Activated CD8-positive, alpha-beta T cell treated with anti-CD3 and anti-CD28 coated beads for 36 hours (primary cell): ENCODE measurements at regions of chr5 and their contacts with region 1.

Region 1: GRCh38 chr5:14644623-14645237 is 19.8 kb upstream of the OTULIN start:
- DNase-seq: no peak
- ATAC-seq: no peak
- H3K4me3 Mint-ChIP-seq: no peak overlapping the region
- H3K27ac Mint-ChIP-seq: no peak overlapping the region
- H3K4me1 Mint-ChIP-seq: no peaks in the 10 kb centered on the region
- H3K27me3 Mint-ChIP-seq: peaks cover 14% of the 10 kb centered on the region
- CTCF ChIP-seq: no peak

Region 2: DNA sequence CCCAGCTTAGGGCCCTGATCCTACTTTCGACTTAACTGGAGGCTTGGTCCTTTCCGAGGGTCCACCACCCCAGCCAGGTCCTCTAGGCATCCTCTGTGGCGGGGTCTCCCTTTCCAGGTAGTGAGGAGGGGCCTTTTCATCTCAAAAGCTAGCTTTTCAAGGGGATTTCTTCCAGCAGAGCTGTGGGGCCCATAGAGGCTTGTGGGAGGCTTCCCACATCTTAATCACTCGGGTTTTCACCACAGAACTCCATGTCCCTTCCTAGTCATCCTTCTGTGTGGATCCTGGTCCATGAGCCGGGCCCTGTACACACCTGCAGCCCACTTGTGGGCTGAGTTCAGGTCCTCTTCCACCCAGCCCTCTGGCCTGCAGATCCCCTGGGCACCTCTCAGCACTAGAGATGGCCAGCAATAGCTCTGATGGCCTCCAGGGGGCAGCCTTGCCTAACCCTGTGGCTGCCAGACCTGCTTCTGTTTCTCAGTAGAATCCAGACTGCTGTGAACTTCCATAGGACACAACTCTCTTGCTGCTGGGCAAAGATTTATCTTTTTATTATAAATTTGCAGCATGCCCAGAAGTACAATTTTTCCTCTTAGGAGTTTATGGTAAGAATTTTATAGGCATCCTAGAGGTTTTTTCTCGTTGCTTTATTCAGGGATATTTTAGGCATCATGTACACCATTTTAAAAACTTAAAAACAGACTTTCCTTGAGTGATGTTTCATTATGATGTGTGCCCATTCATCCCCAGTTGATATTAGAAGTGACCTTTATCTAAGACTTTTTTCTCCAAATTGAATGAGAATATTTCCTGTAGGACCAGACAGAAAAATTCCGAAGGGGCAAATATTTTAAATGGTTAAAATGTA is 292.7 kb before region 1 on chr5:
- CTCF ChIA-PET with region 1: interaction called, 50 read pairs
- POLR2A ChIA-PET with region 1: no interaction called
- intact Hi-C with region 1: no loop called
- DNase-seq: peak; percentile 71
- ATAC-seq: peak; percentile 99
- H3K4me3 Mint-ChIP-seq: no peak overlapping the region
- H3K27ac Mint-ChIP-seq: no peak overlapping the region
- H3K4me1 Mint-ChIP-seq: no peaks in the 10 kb centered on the region
- H3K27me3 Mint-ChIP-seq: peaks cover 1% of the 10 kb centered on the region
- CTCF ChIP-seq: peak; percentile 84

Region 3: DNA sequence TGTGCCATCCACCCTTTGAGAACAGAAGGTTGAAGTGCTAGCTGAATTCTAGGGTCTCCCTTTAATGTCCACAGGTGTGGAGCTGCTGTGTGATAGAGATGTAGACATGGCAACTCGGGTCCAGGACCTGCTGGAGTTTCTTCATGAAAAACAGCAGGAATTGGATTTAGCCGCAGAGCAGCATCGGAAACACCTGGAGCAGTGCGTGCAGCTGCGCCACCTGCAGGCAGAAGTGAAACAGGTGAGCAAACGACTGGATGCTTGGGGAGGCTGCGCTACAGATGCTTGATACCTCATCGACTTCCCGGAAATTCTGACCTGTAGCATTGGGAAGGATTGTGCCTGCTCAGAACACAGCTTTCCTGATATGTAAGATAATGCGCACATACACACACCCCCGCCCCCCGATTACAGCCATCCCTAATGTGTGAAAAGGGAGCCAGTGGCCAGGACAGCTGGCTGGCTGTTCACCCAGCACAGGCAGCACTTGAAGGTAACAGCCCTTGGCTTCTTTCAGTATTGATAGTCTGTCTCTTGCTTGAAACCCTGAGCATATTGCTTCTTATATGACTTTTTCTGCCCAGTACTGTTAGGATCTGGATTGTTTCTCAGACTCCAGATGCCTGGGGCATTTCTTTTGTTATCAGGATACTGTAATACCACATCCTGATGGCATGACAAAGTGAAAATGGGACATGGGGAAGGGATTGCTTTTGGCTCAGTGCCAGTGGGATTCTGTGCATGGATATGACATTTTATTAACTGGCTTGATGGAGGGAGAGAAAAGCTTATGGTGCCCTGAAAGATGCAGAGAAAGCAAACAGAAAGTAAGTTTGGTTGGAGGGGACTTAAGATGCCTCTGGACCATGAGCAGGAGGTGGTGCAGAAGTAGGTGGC is 279.9 kb before region 1 on chr5:
- CTCF ChIA-PET with region 1: interaction called, 172 read pairs
- POLR2A ChIA-PET with region 1: interaction called, 3 read pairs
- intact Hi-C with region 1: loop called (anchors 1 kb)
- DNase-seq: peak; percentile 22
- ATAC-seq: no peak
- H3K4me3 Mint-ChIP-seq: no peak overlapping the region
- H3K27ac Mint-ChIP-seq: peak overlapping the region; percentile 37
- H3K4me1 Mint-ChIP-seq: peaks cover 33% of the 10 kb centered on the region
- H3K27me3 Mint-ChIP-seq: no peaks in the 10 kb centered on the region
- CTCF ChIP-seq: peak; percentile 37

Region 4: GRCh38 chr5:14399054-14399692 is 245.6 kb before region 1 on chr5:
- CTCF ChIA-PET with region 1: interaction called, 121 read pairs
- POLR2A ChIA-PET with region 1: no interaction called
- intact Hi-C with region 1: loop called (anchors 1 kb)
- DNase-seq: peak; percentile 38
- ATAC-seq: peak; percentile 64
- H3K4me3 Mint-ChIP-seq: no peak overlapping the region
- H3K27ac Mint-ChIP-seq: no peak overlapping the region
- H3K4me1 Mint-ChIP-seq: peaks cover 29% of the 10 kb centered on the region
- H3K27me3 Mint-ChIP-seq: no peaks in the 10 kb centered on the region
- CTCF ChIP-seq: peak; percentile 92

Region 5: GRCh38 chr5:14481349-14481748 is 163.4 kb before region 1 on chr5:
- CTCF ChIA-PET with region 1: interaction called, 13 read pairs
- POLR2A ChIA-PET with region 1: no interaction called
- intact Hi-C with region 1: no loop called
- DNase-seq: no peak
- ATAC-seq: no peak
- H3K4me3 Mint-ChIP-seq: no peak overlapping the region
- H3K27ac Mint-ChIP-seq: no peak overlapping the region
- H3K4me1 Mint-ChIP-seq: peaks cover 16% of the 10 kb centered on the region
- H3K27me3 Mint-ChIP-seq: no peaks in the 10 kb centered on the region
- CTCF ChIP-seq: no peak

Region 6: GRCh38 chr5:14595189-14595588 is 49.5 kb before region 1 on chr5:
- CTCF ChIA-PET with region 1: interaction called, 14 read pairs
- POLR2A ChIA-PET with region 1: no interaction called
- intact Hi-C with region 1: no loop called
- DNase-seq: peak; percentile 70
- ATAC-seq: peak; percentile 76
- H3K4me3 Mint-ChIP-seq: peak overlapping the region; percentile 65
- H3K27ac Mint-ChIP-seq: peak overlapping the region; percentile 96
- H3K4me1 Mint-ChIP-seq: peaks cover 92% of the 10 kb centered on the region
- H3K27me3 Mint-ChIP-seq: no peaks in the 10 kb centered on the region
- CTCF ChIP-seq: no peak

Region 7: DNA sequence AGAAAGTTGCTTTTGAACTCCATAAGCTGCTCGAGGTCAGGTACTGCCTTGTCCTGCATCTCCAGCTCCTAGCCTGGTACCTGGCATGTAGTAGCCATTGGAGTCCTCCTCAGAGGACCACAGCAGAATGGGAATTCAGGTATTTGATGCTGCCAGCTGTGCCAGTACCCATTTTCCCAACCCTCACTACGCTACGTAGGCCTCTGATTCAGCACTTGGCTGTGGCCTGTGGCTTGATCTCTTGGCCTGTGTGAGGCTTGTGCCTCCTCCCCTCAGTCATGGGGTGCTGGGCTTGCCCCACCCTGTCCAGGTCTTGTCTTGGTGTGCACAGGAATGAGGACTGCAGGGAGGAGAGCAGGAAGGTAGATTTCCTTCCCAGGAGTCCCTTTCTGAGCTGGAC is 31.6 kb after region 1 on chr5:
- CTCF ChIA-PET with region 1: interaction called, 10 read pairs
- POLR2A ChIA-PET with region 1: interaction called, 3 read pairs
- intact Hi-C with region 1: no loop called
- DNase-seq: peak; percentile 57
- ATAC-seq: peak; percentile 76
- H3K4me3 Mint-ChIP-seq: peak overlapping the region; percentile 50
- H3K27ac Mint-ChIP-seq: peak overlapping the region; percentile 90
- H3K4me1 Mint-ChIP-seq: peaks cover 71% of the 10 kb centered on the region
- H3K27me3 Mint-ChIP-seq: no peaks in the 10 kb centered on the region
- CTCF ChIP-seq: no peak